Activated T-helper 1 cell treated with anti-CD3 and anti-CD28 coated beads, Interleukin-12 subunit alpha, Interleukin-12 subunit beta, Interleukin-2, Interleukin-4 antibody, amounts not matched to agents 30 ng/mL and 10 ng/mL and 1 ng/mL, durations not matched to agents 14 hours and 24 hours and 36 hours (primary cell): ENCODE measurements at regions of chr10 and their contacts with region 1.

Region 1: GRCh38 chr10:22988581-22989360 is 60.9 kb downstream of the ARMC3 start:
- DNase-seq: peak; percentile 57
- H3K4me3 Mint-ChIP-seq: no peak overlapping the region
- H3K27ac Mint-ChIP-seq: no peak overlapping the region
- H3K4me1 Mint-ChIP-seq: peaks cover 22% of the 10 kb centered on the region
- H3K27me3 Mint-ChIP-seq: peaks cover 9% of the 10 kb centered on the region

Region 2: DNA sequence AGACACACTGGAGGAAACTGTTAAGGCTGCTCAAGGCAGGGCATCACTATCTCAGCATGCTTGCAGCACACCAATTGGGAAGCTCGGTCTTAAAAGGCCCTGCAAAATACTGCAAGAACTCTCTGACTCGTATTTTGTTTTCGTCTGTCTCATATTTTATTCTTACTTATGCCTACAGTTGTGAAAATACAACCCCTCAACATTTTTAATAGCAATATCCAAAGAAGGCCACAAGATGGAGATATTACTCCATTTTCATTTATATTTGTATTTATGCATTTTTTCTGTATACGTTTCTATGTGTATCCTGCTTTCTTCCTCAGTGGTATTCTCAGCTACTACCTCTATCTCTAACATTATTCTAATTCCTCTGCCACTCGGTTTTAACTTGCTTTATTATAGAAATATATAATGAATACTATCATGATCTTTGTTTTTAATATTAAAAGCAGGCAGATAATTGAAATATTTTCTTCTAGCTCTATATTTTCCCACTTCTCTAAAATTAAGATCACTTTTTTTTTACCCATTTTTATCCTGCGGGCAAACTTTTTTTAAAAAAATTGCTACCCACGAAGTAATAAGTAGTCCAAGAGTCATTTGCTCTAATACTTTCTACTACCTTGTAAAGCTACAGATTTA is 995.3 kb before region 1 on chr10:
- intact Hi-C with region 1: loop called (anchors 1 kb)
- DNase-seq: no peak
- H3K4me3 Mint-ChIP-seq: no peak overlapping the region
- H3K27ac Mint-ChIP-seq: no peak overlapping the region
- H3K4me1 Mint-ChIP-seq: peaks cover 29% of the 10 kb centered on the region
- H3K27me3 Mint-ChIP-seq: no peaks in the 10 kb centered on the region

Region 3: DNA sequence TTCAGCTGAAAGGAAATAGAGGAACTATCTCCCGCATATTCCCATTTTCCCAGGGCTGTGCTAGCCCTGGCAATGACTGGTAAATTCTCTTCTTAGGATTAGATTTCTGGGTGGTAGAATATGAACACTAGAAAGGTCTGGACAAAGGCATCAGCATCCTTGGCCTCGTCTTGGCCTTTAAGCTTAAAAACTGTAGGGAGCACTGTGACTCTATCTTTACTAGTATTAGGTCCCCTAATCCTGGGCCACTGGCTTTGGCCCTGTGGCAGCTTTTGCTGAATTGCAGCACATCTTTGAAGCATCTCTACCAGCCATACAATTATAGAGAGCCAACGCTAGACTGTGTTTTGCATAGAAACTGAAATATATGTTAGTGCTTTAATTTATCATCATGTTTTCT is 729.5 kb before region 1 on chr10:
- intact Hi-C with region 1: loop called (anchors 1 kb)
- DNase-seq: no peak
- H3K4me3 Mint-ChIP-seq: no peak overlapping the region
- H3K27ac Mint-ChIP-seq: no peak overlapping the region
- H3K4me1 Mint-ChIP-seq: peaks cover 7% of the 10 kb centered on the region
- H3K27me3 Mint-ChIP-seq: peaks cover 30% of the 10 kb centered on the region

Region 4: GRCh38 chr10:22475651-22476600 is 512.8 kb before region 1 on chr10:
- intact Hi-C with region 1: loop called (anchors 5 kb)
- DNase-seq: peak; percentile 3
- H3K4me3 Mint-ChIP-seq: peak overlapping the region; percentile 86
- H3K27ac Mint-ChIP-seq: peak overlapping the region; percentile 86
- H3K4me1 Mint-ChIP-seq: peaks cover 20% of the 10 kb centered on the region
- H3K27me3 Mint-ChIP-seq: peaks cover 61% of the 10 kb centered on the region

Region 5: DNA sequence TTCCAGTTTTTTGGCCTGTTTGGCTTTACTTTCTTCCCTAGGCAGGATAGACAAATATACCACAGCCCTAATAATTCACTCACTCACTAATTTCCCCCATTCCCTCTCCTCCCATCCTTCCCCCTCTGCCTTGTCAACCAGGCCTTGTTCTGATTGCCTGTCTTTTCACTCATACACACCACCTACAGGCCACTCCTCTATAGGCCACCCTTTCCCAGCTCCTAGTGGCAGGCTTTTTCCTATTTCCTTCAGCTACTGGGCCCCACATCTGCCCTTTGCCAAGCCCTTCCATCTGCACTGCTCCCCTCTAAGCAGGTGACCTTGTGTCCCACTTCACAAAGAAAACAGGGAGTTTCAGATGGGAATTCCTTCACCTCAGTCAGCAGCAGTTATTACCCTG is 46.8 kb after region 1 on chr10:
- intact Hi-C with region 1: no loop called
- DNase-seq: no peak
- H3K4me3 Mint-ChIP-seq: no peak overlapping the region
- H3K27ac Mint-ChIP-seq: no peak overlapping the region
- H3K4me1 Mint-ChIP-seq: no peaks in the 10 kb centered on the region
- H3K27me3 Mint-ChIP-seq: peaks cover 14% of the 10 kb centered on the region

Region 6: DNA sequence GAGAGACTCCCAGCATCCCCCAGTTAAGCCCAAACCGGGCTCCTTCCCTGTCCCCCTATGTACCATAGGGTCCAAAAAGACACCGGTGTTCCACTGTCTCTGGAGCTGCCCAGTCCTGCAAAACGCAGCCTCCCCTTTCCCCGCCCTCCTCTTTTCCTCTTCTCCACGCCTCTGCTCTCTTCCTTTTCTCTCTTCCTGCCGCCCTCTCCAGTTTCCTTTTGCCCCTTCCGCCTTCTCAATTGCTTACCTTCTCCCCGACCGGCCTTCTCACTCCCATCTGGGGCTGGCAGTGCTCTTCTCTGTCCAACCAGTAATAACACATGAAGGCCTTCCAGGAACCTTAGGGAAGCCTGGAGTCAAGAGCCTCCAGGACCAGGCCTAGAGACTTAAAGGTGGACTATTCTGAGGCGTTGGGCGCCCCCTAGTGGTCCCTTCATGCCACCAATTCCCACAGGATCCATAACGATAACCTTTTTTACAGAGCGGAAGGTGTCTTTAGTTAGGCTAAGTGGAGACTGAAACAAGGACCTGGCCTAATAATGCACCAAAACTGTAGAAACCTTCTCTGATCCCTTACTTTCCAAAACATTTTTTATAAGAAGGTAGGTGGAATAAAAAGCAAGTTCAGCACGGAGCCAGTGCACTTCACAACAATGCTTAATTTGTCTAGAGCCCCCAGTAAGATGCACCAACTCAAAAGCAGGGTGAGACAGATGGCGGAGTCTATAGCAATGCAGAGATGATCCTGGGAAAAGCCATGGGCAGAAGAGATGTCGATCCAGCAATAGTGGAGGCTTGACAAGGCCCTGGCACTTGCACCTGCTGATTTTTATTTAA is 79.4 kb after region 1 on chr10:
- intact Hi-C with region 1: loop called (anchors 1 kb)
- DNase-seq: peak; percentile 14
- H3K4me3 Mint-ChIP-seq: no peak overlapping the region
- H3K27ac Mint-ChIP-seq: no peak overlapping the region
- H3K4me1 Mint-ChIP-seq: no peaks in the 10 kb centered on the region
- H3K27me3 Mint-ChIP-seq: peaks cover 8% of the 10 kb centered on the region